ENCODE measurements at regions of chr19 and their contacts with region 1.

Region 1: DNA sequence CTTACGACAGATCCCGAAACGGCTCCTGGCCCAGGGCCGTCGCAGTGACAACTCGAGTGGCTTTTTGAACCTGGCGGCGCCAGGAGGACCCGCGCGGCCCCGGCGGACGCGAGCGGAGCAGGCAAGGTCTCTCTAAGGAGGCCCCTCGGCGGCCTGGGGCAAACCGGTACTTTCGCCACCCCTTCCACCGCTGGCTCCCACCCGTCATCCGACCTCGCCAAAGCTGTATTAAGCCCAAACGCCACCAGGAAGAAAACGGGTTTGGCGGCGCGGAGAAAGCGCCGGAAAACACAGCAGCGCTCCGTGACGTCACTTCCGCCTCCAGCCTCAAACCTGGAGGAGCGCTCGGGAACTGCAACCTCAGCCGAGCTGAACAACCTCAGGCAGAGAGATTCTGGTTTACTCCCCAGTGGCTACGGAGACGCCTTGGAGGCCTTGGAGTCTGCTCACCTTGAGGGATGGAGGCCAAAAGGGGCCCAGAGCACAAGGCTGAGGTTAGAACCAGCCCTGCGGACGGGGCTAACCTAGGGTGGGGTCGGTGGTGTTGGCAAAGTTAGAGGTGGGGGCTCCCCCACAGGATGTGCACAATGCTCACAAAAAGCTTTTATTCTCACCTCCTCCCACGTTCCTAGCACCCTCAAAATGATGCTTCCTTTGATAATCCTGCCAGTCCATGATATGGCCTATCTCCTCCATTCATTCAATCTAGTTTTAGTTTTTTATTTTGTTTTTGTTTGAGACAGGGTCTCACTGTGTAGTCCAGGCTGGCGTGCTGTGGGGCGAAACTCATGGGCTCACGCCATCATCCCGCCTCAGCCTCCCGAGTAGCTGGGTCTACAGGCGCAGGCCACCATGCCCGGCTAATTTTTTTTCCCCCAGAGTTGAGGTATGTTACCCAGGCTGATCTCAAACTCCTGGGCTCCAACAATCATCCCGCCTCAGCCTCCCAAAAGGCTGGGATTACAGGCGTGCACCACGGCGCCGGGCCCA is at the start of gene ZNF266:
- DNase-seq: peak; percentile 87 to 97 (median 90)
- ATAC-seq: peak; percentile 89
- H3K4me3 ChIP-seq: peak within 1 kb of the TSS; percentile 66
- H3K4me3 Mint-ChIP-seq: peak within 1 kb of the TSS; percentile 95
- H3K27ac ChIP-seq: peak within 1 kb of the TSS; percentile 85 to 89
- H3K27ac Mint-ChIP-seq: peak within 1 kb of the TSS; percentile 97
- H3K4me1 ChIP-seq: peaks cover 19% of the 10 kb centered on the region
- H3K4me1 Mint-ChIP-seq: peaks cover 49% of the 10 kb centered on the region
- H3K27me3 ChIP-seq: no peaks in the 10 kb centered on the region
- H3K27me3 Mint-ChIP-seq: no peaks in the 10 kb centered on the region
- CTCF ChIP-seq: peak; percentile 80
- total RNA-seq, gene ZNF266: 45.5 to 46.2 TPM

Region 2: GRCh38 chr19:8832132-8833021 is 603.2 kb before region 1 on chr19 and contains the starts of genes MBD3L1 and ZNF558:
- CTCF ChIA-PET with region 1: no interaction called
- POLR2A ChIA-PET with region 1: interaction called, 3 read pairs
- intact Hi-C with region 1: loop called in 1 of 2 experiments (anchors 10 kb)
- DNase-seq: peak; percentile 95 to 100 (median 99)
- ATAC-seq: peak; percentile 88
- H3K4me3 ChIP-seq: peak within 1 kb of the TSS; percentile 90
- H3K4me3 Mint-ChIP-seq: peak within 1 kb of the TSS; percentile 97
- H3K27ac ChIP-seq: peak within 1 kb of the TSS; percentile 89 to 92
- H3K27ac Mint-ChIP-seq: peak within 1 kb of the TSS; percentile 95
- H3K4me1 ChIP-seq: peaks cover 15% of the 10 kb centered on the region
- H3K4me1 Mint-ChIP-seq: peaks cover 31% of the 10 kb centered on the region
- H3K27me3 ChIP-seq: no peaks in the 10 kb centered on the region
- H3K27me3 Mint-ChIP-seq: no peaks in the 10 kb centered on the region
- CTCF ChIP-seq: peak; percentile 48
- total RNA-seq, gene MBD3L1: not detected
- total RNA-seq, gene ZNF558: 22.2 to 23.3 TPM

Region 3: DNA sequence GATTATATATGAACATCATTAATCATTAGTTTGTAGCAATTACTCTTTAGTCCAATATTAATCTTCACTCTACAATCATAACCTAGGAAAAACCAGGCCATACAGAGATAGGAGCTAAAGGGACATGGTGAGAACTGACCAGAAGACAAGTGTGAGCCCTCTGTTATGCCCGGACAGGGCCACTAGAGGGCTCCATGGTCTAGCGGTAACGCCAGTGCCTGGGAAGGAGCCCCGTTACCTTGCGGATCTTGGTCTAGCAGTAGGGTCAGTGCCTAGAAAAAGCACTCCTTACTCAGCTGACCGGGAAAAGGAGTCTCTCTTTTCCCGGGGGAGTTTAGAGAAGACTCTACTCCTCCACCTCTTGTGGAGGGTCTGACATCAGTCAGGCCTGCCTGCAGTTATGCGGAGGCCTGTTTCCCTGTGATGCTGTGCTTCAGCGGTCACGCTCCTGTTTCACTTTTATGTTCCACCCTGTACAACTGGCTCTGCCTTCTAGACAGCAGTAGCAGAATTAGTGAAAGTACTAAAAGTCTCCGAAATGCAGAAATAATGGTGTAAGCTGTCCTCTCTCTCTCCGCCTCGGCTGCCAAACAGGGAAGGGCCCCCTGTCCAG is 230.0 kb before region 1 on chr19:
- CTCF ChIA-PET with region 1: interaction called, 11 read pairs
- POLR2A ChIA-PET with region 1: no interaction called
- intact Hi-C with region 1: loop called (anchors 1 kb)
- DNase-seq: peak; percentile 40 to 78 (median 58)
- ATAC-seq: peak; percentile 58
- H3K4me3 ChIP-seq: peak overlapping the region; percentile 20
- H3K4me3 Mint-ChIP-seq: peak overlapping the region; percentile 56
- H3K27ac ChIP-seq: no peak overlapping the region
- H3K27ac Mint-ChIP-seq: no peak overlapping the region
- H3K4me1 ChIP-seq: peaks cover 3% of the 10 kb centered on the region
- H3K4me1 Mint-ChIP-seq: no peaks in the 10 kb centered on the region
- H3K27me3 ChIP-seq: no peaks in the 10 kb centered on the region
- H3K27me3 Mint-ChIP-seq: peaks cover 8% of the 10 kb centered on the region
- CTCF ChIP-seq: peak; percentile 96

Region 4: DNA sequence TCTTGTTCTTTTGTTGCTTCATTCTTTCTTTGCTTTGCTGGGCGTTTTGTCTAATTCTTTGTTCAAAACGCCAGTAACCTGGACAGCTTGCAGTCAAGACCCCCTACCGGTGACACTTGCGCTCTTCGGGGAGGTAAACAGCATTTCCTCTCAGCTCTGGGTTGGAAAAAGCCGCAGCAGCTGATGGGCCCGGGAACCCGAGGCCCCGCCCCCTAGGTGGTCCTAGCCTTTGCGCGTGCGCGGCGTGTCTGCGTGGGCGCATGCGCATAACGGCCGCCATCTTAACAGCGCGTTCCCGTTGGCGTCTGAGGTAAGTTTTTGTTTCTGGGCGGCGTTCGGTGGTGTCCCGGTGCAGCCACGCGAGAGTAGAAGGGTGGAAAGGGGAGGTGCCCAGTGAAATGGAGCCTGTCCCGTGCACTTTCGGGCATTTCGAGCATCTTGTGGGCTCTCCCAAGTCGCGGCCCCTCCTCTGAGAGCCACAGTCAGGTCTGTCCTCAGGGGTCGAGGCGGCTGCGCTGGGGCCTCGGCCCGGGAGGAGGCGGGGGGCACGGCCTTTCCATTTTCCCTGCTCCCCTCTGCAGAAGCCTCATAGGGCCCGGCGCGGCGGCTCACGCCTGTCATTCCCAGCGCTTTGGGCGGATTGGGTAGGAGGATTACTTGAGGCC is 111.5 kb before region 1 on chr19 and contains the start of gene ZNF559:
- CTCF ChIA-PET with region 1: interaction called, 3 read pairs
- POLR2A ChIA-PET with region 1: interaction called, 16 read pairs
- intact Hi-C with region 1: no loop called
- DNase-seq: peak; percentile 94 to 98 (median 97)
- ATAC-seq: peak; percentile 97
- H3K4me3 ChIP-seq: peak within 1 kb of the TSS; percentile 87
- H3K4me3 Mint-ChIP-seq: peak within 1 kb of the TSS; percentile 96
- H3K27ac ChIP-seq: peak within 1 kb of the TSS; percentile 80 to 83
- H3K27ac Mint-ChIP-seq: peak within 1 kb of the TSS; percentile 90
- H3K4me1 ChIP-seq: peaks cover 25% of the 10 kb centered on the region
- H3K4me1 Mint-ChIP-seq: peaks cover 33% of the 10 kb centered on the region
- H3K27me3 ChIP-seq: no peaks in the 10 kb centered on the region
- H3K27me3 Mint-ChIP-seq: no peaks in the 10 kb centered on the region
- CTCF ChIP-seq: peak; percentile 65
- total RNA-seq, gene ZNF559: 4.7 to 6.5 TPM

Region 5: DNA sequence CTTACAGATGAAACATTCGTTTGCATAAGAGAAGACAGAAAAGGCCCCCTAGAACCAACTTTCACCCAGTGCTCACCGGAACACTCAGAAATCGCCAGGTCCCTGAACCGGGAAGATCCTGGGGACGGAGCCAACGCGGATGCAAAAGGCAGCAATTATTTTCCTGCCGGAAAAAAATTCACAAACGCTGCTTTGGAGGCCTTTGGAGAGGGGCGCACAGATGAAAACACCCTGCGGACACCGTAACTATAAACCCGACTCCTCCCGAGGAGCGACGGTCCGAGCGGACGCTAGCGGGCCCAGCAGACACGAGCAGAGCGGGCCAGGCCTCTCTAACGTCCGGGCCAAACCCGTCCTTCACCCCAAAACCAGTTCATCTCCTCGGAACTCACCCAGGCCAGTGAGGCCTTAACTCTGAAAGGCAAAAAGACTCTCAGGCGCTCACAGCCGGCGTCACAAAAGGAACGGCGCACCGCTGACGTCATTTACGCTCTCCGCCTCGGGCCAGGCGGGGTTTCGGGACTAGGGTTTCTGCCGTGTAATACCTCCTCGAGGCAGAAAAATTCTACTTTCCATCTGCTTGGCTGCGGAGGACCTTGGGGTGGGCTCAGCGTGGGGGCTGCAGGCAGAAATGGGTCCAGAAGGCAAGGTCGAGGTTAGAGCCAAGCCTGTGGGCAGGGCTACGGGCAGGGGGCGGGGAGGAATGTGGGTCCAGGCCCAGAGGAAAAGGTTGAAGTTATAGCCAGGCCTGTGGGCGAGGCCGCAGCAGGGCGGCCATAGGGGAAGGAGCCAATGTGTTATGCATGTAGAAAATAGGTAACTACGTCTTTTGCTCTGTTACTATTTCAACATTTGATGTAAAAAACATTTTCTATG is 102.8 kb after region 1 on chr19 and contains the start of gene ZNF426:
- CTCF ChIA-PET with region 1: no interaction called
- POLR2A ChIA-PET with region 1: interaction called, 5 read pairs
- intact Hi-C with region 1: loop called (anchors 1 to 10 kb)
- DNase-seq: peak; percentile 62 to 91 (median 80)
- ATAC-seq: peak; percentile 94
- H3K4me3 ChIP-seq: peak within 1 kb of the TSS; percentile 78
- H3K4me3 Mint-ChIP-seq: peak within 1 kb of the TSS; percentile 95
- H3K27ac ChIP-seq: peak within 1 kb of the TSS; percentile 64 to 84
- H3K27ac Mint-ChIP-seq: peak within 1 kb of the TSS; percentile 98
- H3K4me1 ChIP-seq: peaks cover 16% of the 10 kb centered on the region
- H3K4me1 Mint-ChIP-seq: peaks cover 32% of the 10 kb centered on the region
- H3K27me3 ChIP-seq: no peaks in the 10 kb centered on the region
- H3K27me3 Mint-ChIP-seq: no peaks in the 10 kb centered on the region
- CTCF ChIP-seq: no peak
- total RNA-seq, gene ZNF426: 14.9 to 15.3 TPM

Region 6: GRCh38 chr19:9674663-9675357 is 239.2 kb after region 1 on chr19 and contains the start of gene ZNF562:
- CTCF ChIA-PET with region 1: no interaction called
- POLR2A ChIA-PET with region 1: no interaction called
- intact Hi-C with region 1: loop called in 1 of 2 experiments (anchors 2 kb)
- DNase-seq: peak; percentile 64 to 89 (median 73)
- ATAC-seq: peak; percentile 88
- H3K4me3 ChIP-seq: peak within 1 kb of the TSS; percentile 92
- H3K4me3 Mint-ChIP-seq: peak within 1 kb of the TSS; percentile 99
- H3K27ac ChIP-seq: peak within 1 kb of the TSS; percentile 81 to 83
- H3K27ac Mint-ChIP-seq: peak within 1 kb of the TSS; percentile 98
- H3K4me1 ChIP-seq: peaks cover 13% of the 10 kb centered on the region
- H3K4me1 Mint-ChIP-seq: peaks cover 23% of the 10 kb centered on the region
- H3K27me3 ChIP-seq: no peaks in the 10 kb centered on the region
- H3K27me3 Mint-ChIP-seq: no peaks in the 10 kb centered on the region
- CTCF ChIP-seq: no peak
- total RNA-seq, gene ZNF562: 12.8 to 13.3 TPM